ENCODE measurements at regions of chr3 and their contacts with region 1.

Region 1: GRCh38 chr3:85304359-85304964 is 345.7 kb downstream of the CADM2 start:
- DNase-seq: peak; percentile 70
- ATAC-seq: peak; percentile 62
- H3K4me3 ChIP-seq: no peak overlapping the region
- H3K27ac ChIP-seq: no peak overlapping the region
- H3K4me1 ChIP-seq: no peaks in the 10 kb centered on the region
- H3K27me3 ChIP-seq: no peaks in the 10 kb centered on the region
- CTCF ChIP-seq: peak; percentile 77

Region 2: GRCh38 chr3:84974347-84974746 is 330.1 kb before region 1 on chr3:
- CTCF ChIA-PET with region 1: no interaction called
- POLR2A ChIA-PET with region 1: no interaction called
- intact Hi-C with region 1: loop called (anchors 2 kb)
- DNase-seq: peak; percentile 35
- ATAC-seq: peak; percentile 80
- H3K4me3 ChIP-seq: no peak overlapping the region
- H3K27ac ChIP-seq: no peak overlapping the region
- H3K4me1 ChIP-seq: no peaks in the 10 kb centered on the region
- H3K27me3 ChIP-seq: peaks cover 12% of the 10 kb centered on the region; the same call in 1 of the 2 replicates
- CTCF ChIP-seq: peak; percentile 50

Region 3: GRCh38 chr3:85259748-85260147 is 44.7 kb before region 1 on chr3:
- CTCF ChIA-PET with region 1: no interaction called
- POLR2A ChIA-PET with region 1: no interaction called
- intact Hi-C with region 1: no loop called
- DNase-seq: peak; percentile 43
- ATAC-seq: peak; percentile 70
- H3K4me3 ChIP-seq: no peak overlapping the region
- H3K27ac ChIP-seq: no peak overlapping the region
- H3K4me1 ChIP-seq: no peaks in the 10 kb centered on the region
- H3K27me3 ChIP-seq: no peaks in the 10 kb centered on the region
- CTCF ChIP-seq: no peak

Region 4: DNA sequence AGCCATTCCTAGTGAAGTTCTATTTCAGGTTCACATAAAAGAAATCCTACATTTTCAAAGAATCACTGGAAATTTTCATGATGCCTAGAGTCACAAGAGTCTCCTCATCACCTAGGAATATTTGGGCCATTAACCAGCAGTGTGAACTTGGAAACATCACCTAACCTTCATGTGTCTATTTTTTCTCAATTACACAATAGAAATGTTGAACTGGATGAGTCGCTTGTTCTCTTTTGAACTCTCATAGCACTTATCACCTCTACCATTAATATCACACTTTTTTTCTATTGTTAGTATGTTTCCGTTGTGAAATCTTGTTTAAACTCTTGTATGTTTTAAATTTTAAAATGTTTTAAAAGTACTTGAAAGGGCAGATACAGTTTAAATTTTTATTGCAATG is 25.6 kb after region 1 on chr3:
- CTCF ChIA-PET with region 1: no interaction called
- POLR2A ChIA-PET with region 1: interaction called, 5 read pairs
- intact Hi-C with region 1: loop called (anchors 1 kb)
- DNase-seq: no peak
- ATAC-seq: no peak
- H3K4me3 ChIP-seq: no peak overlapping the region
- H3K27ac ChIP-seq: no peak overlapping the region
- H3K4me1 ChIP-seq: peaks cover 13% of the 10 kb centered on the region
- H3K27me3 ChIP-seq: no peaks in the 10 kb centered on the region
- CTCF ChIP-seq: no peak

Region 5: DNA sequence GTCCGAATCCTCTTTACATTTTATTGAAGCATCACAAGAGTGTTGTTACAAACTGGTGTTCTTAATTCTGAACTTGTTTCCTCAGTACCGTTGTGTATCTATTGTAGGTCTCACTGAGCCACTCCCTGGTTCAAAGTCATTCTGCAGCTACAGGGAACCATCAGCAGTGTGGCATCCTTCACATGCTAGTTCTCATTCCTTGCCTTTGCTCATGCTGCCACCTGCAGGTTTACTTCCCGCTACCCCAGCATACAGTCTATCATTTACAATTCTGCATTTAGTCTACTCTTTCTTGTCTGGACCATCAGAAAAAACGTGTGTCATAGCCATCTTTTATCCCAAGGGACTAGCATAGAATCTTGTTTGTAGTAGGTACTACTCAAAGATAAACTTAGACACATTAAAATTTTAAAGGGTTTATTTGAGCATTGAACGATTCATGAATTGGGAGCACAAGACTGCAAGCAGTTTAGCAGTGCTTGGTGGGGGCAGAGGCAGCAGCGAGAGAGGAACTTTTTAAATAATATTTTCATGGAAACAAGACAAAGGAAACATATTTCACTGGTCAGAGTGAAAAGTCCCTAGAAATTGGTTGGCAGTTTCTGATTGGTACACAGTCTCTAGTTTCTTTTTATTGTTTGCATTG is 56.4 kb after region 1 on chr3:
- CTCF ChIA-PET with region 1: interaction called, 3 read pairs
- POLR2A ChIA-PET with region 1: no interaction called
- intact Hi-C with region 1: loop called (anchors 1 kb)
- DNase-seq: peak; percentile 83
- ATAC-seq: peak; percentile 100
- H3K4me3 ChIP-seq: no peak overlapping the region
- H3K27ac ChIP-seq: no peak overlapping the region
- H3K4me1 ChIP-seq: no peaks in the 10 kb centered on the region
- H3K27me3 ChIP-seq: no peaks in the 10 kb centered on the region
- CTCF ChIP-seq: peak; percentile 94

Region 6: GRCh38 chr3:85801955-85802354 is 497.5 kb after region 1 on chr3:
- CTCF ChIA-PET with region 1: no interaction called
- POLR2A ChIA-PET with region 1: no interaction called
- intact Hi-C with region 1: loop called (anchors 2 kb)
- DNase-seq: peak; percentile 80
- ATAC-seq: peak; percentile 95
- H3K4me3 ChIP-seq: no peak overlapping the region
- H3K27ac ChIP-seq: no peak overlapping the region
- H3K4me1 ChIP-seq: no peaks in the 10 kb centered on the region; the same call in 1 of the 2 replicates
- H3K27me3 ChIP-seq: no peaks in the 10 kb centered on the region
- CTCF ChIP-seq: peak; percentile 91

Measured in PC-3 (cell line).